Testis (tissue), 5 donors: ENCODE measurements at regions of chr11 and their contacts with region 1.

Region 1: GRCh38 chr11:31492320-31492913 is 17.0 kb downstream of the IMMP1L start:
- DNase-seq: no peak
- H3K4me3 ChIP-seq: no peak overlapping the region
- H3K27ac ChIP-seq: no peak overlapping the region
- H3K4me1 ChIP-seq: peaks cover 3% of the 10 kb centered on the region
- H3K27me3 ChIP-seq: no peaks in the 10 kb centered on the region
- CTCF ChIP-seq: no peak
- POLR2A ChIP-seq: no peak

Region 2: GRCh38 chr11:31535479-31535878 is 43.1 kb after region 1 on chr11:
- intact Hi-C with region 1: no loop called
- DNase-seq: no peak
- H3K4me3 ChIP-seq: no peak overlapping the region
- H3K27ac ChIP-seq: no peak overlapping the region
- H3K4me1 ChIP-seq: no peaks in the 10 kb centered on the region
- H3K27me3 ChIP-seq: no peaks in the 10 kb centered on the region
- CTCF ChIP-seq: no peak
- POLR2A ChIP-seq: no peak

Region 3: DNA sequence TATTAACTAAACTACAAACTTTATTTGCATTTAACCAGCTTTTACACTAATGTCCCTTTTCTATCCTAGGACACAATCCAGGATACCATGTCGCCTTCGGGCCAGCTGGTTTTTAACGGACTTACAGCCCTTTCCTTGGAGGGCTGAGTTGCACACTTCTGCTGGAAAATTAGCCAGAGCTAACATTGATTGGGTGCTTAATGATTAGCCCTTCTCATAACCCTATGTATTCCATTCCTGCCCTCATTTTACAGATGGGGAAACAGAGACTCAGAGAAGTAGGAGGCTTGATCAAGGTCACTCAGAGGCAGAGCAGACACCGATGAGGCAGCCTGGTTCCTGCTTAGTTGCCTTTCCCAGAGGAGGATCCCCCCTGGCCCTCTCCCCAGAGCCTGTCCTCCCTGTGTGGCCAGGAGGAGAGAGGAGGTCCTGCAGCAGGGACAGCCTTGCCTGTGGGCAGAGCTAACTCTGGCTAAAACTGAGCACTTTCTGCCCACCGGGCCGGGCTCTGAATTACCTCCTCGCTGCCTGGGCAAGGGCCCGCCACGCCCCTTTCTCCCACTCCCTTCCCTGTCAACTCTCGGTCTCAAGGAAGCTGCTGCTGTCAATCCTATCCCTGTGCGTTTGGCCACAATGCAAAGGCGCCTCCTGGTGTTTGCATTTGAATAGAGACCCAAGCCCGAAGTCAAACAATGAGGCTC is 378.3 kb after region 1 on chr11:
- intact Hi-C with region 1: loop called (anchors 5 kb)
- DNase-seq: peak; percentile 68
- H3K4me3 ChIP-seq: no peak overlapping the region
- H3K27ac ChIP-seq: no peak overlapping the region
- H3K4me1 ChIP-seq: no peaks in the 10 kb centered on the region
- H3K27me3 ChIP-seq: no peaks in the 10 kb centered on the region
- CTCF ChIP-seq: peak in 2 of 3 experiments; percentile 40 to 57
- POLR2A ChIP-seq: no peak